ENCODE measurements at regions of chr2 and their contacts with region 1.

Region 1: DNA sequence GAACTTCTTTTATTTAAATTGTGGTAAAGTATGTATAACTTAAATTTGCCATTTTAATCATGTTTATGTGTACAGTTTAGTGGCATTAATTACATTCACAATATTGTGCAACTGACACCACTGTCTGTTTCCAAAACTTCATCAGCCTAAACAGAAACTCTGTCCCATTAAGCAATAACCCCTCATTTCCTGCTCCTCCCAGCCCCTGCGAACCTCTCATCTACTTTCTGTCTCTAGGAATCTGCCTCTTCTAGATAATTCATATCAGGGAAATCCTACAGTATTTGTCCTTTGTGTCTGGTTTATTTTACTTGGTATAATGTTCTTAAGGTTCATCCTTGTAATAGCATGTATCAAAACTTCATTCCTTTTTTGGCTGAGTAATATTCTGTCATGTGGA is 75.1 kb downstream of the BOLA3 start:
- DNase-seq: no peak
- ATAC-seq: no peak
- H3K4me3 ChIP-seq: no peak overlapping the region
- H3K4me3 Mint-ChIP-seq: no peak overlapping the region
- H3K27ac ChIP-seq: no peak overlapping the region
- H3K27ac Mint-ChIP-seq: no peak overlapping the region
- H3K4me1 ChIP-seq: no peaks in the 10 kb centered on the region
- H3K4me1 Mint-ChIP-seq: peaks cover 7% of the 10 kb centered on the region
- H3K27me3 ChIP-seq: no peaks in the 10 kb centered on the region
- H3K27me3 Mint-ChIP-seq: no peaks in the 10 kb centered on the region
- CTCF ChIP-seq: no peak

Region 2: GRCh38 chr2:73952499-73953458 is 119.8 kb before region 1 on chr2:
- CTCF ChIA-PET with region 1: interaction called, 3 read pairs
- POLR2A ChIA-PET with region 1: interaction called, 10 read pairs
- intact Hi-C with region 1: no loop called
- DNase-seq: no peak
- ATAC-seq: no peak
- H3K4me3 ChIP-seq: no peak overlapping the region
- H3K4me3 Mint-ChIP-seq: no peak overlapping the region
- H3K27ac ChIP-seq: no peak overlapping the region
- H3K27ac Mint-ChIP-seq: no peak overlapping the region
- H3K4me1 ChIP-seq: peaks cover 23% of the 10 kb centered on the region in 2 donors
- H3K4me1 Mint-ChIP-seq: peaks cover 26% of the 10 kb centered on the region
- H3K27me3 ChIP-seq: no peaks in the 10 kb centered on the region
- H3K27me3 Mint-ChIP-seq: no peaks in the 10 kb centered on the region
- CTCF ChIP-seq: no peak

Region 3: DNA sequence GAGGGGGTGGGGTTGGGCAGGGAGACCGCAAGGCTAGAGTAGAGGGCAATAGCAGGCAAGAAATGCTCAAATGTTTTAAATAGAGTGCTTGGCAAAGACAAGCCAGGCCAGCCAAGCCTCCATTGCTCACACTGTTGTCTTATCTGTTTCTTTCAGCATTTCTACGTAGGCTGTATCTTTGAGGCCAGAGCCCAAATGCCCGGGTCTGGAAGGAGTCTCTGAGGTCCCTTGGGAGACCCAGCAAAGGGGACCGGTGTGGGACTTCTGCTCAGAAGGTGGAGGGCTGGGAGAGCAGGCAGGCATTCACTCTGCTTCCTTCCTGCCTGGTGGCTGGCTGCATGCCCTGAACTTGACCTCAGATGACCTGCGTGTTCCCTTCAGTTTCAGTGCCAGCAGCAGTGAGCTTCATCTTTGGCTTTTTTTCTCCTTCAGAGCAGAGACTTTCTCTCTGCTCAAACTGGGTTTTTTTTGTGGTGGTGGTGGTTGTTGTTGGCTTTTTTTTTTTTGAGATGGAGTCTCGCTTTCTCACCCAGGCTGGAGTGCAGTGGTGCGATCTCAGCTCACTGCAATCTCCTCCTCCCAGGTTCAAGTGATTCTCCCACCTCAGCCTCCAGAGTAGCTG is 101.6 kb before region 1 on chr2:
- CTCF ChIA-PET with region 1: no interaction called
- POLR2A ChIA-PET with region 1: no interaction called
- intact Hi-C with region 1: no loop called
- DNase-seq: peak; percentile 76
- ATAC-seq: peak; percentile 86
- H3K4me3 ChIP-seq: peak overlapping the region in 3 of 5 experiments; percentile 23 to 47 (median 31)
- H3K4me3 Mint-ChIP-seq: peak overlapping the region; percentile 73
- H3K27ac ChIP-seq: peak overlapping the region; percentile 5 to 53
- H3K27ac Mint-ChIP-seq: peak overlapping the region; percentile 65
- H3K4me1 ChIP-seq: peaks cover 35 to 38% of the 10 kb centered on the region in 2 donors
- H3K4me1 Mint-ChIP-seq: peaks cover 46% of the 10 kb centered on the region
- H3K27me3 ChIP-seq: no peaks in the 10 kb centered on the region
- H3K27me3 Mint-ChIP-seq: no peaks in the 10 kb centered on the region
- CTCF ChIP-seq: no peak

Region 4: DNA sequence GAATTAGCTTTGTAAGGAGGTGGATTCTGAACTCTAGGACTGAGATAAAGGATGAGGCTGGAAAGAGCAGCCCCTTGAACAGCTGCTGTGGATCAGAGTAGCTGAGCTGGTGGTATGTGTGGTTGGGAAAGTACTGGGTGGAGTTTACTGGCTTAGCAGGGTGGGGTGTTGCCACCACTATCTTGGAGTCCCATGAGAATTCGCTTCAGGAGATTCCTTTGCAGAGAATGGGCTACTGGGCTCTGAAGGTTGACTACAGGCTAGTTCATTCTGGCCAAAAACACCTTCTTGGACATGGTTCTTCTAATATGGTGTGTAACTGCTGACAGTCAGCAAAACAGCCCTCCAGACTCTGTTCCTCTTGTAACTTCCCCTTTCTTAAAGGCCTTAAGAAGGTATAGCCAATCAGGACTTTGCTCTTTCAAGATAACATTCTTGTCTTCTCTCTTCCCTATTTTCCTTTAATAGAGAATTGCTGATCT is 35.1 kb before region 1 on chr2:
- CTCF ChIA-PET with region 1: no interaction called
- POLR2A ChIA-PET with region 1: no interaction called
- intact Hi-C with region 1: no loop called
- DNase-seq: peak; percentile 82
- ATAC-seq: peak; percentile 83
- H3K4me3 ChIP-seq: peak overlapping the region in 2 of 5 experiments; percentile 8 to 34
- H3K4me3 Mint-ChIP-seq: peak overlapping the region; percentile 82
- H3K27ac ChIP-seq: peak overlapping the region; percentile 73
- H3K27ac Mint-ChIP-seq: peak overlapping the region; percentile 88
- H3K4me1 ChIP-seq: peaks cover 72 to 73% of the 10 kb centered on the region in 2 donors
- H3K4me1 Mint-ChIP-seq: peaks cover 83% of the 10 kb centered on the region
- H3K27me3 ChIP-seq: no peaks in the 10 kb centered on the region
- H3K27me3 Mint-ChIP-seq: no peaks in the 10 kb centered on the region
- CTCF ChIP-seq: no peak

Measured in B cell (primary cell).